GM13977 (cell line): ENCODE measurements at regions of chr12 and their contacts with region 1.

Region 1: DNA sequence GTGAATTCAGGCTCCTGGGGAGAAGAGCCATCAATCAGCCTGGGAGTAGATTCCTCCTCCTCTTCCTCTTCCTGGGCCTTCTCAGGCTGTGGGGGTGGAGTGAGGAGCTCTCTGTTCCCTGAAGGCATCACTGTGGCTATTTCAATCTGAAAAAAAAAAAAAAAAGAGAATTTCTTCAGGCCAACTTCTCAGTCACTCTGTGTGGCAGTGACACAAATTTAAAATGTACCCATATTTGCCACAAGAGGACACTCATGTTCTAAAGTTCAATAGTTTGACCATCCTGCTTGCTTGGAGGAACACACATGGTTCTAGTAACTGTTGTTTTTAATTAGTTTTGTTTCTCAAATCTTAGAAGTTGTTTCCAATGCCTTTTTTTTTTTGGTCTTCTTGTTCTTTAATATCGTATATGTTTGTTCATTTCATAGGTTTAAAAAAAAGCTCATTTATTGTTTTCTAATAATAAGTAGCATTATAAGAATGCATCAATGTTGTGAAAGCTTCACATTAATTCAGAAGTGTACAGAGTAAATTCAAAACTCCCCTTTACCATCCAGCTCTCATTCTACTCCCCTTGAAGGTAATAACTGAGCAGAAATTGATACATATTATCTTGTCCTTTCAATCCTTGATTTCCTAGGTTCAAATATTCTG is 23.3 kb upstream of the CCER1 start:
- DNase-seq: peak; percentile 17
- CTCF ChIP-seq: peak; percentile 67

Region 2: GRCh38 chr12:91316907-91317269 is 338.6 kb after region 1 on chr12:
- in situ Hi-C with region 1: loop called (anchors 25 kb)
- DNase-seq: no peak
- CTCF ChIP-seq: no peak

Region 3: DNA sequence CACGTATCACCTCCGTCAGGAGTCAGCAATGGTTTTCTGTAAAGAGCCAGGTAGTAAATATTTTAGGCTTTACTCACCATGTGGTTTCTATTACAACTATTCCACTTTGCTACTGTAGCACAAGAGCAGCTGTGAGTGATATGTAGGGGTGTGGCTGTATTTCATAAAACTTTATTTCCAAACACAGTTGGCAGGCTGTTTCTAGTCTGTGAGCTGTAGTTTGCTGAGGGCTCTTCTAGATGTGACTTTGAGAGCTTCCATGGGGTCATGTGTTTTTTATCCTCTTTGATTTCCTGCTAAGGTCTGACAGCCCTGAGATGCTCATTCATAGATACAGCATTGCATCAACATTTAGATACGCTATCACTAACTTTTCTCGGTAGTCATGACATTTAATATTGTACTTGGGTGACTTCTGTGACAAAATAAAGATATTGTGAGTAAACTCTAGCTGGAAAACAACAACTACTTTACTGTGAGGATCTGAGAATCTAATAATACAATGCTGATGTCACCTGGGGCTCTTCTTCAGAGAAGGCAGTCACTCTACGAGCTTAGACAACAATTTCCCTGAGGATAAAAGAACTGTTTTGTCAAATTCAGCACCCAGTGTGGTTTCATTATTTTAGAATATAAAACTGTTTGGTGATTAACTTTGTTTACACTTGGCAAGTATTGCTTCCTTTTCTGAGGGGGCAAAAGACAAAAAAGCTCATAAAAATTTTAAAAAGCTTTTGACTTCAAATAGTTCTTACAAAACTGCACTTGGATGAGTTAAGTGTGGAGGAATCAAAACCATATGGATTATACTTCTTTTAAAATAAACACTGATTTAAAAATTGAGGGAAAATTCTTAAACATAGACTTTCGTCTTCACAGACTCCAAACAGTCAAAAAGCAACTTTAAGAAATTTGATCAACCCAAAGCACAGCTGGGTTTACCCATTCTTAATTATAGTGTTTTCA is 435.6 kb after region 1 on chr12:
- in situ Hi-C with region 1: no loop called
- DNase-seq: no peak
- CTCF ChIP-seq: no peak

Region 4: GRCh38 chr12:91432089-91432488 is 453.8 kb after region 1 on chr12:
- in situ Hi-C with region 1: no loop called
- DNase-seq: no peak
- CTCF ChIP-seq: no peak